Right ventricle myocardium inferior (tissue), 1 donor: ENCODE measurements at regions of chr11 and their contacts with region 1.

Region 1: DNA sequence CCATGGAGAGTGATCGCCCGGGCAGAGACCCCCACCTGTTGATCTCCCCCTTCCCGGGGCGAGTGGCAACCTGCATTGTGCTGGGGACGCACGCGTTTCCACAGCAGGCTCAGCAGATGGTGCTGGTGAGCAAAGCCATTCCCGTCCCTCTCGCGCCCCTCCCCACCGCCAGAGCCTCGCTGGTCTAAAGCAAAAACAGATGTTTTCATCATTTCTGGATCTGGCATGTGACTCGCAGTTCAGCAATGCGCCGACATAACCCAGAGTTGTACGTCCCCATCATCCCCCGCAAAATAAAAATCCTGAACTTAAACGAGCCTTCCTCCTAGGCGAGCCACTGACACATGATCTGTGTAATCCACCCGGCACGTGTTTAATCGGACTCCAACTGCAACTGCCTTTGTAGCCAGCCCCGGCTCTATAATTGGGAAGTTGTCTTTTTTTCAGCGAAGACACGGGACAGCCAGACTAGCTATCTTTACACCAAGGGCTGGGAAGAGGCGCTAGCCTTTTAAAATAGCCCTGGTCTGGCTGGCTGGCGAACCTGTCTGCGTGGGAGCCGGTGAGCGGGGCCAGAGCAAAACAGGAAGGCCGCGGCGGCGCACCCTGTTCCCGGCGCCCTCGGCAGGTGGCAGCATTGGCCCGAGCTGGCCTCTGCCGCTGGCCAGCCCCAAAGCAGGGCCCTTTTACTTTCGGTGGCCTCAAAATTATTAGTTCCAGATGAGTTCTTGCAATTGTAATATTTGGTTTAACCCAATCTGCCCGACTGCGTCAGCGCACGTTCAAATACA is 203.0 kb upstream of the SORL1-AS1 start:
- DNase-seq: peak; percentile 94
- ATAC-seq: peak; percentile 96

Region 2: DNA sequence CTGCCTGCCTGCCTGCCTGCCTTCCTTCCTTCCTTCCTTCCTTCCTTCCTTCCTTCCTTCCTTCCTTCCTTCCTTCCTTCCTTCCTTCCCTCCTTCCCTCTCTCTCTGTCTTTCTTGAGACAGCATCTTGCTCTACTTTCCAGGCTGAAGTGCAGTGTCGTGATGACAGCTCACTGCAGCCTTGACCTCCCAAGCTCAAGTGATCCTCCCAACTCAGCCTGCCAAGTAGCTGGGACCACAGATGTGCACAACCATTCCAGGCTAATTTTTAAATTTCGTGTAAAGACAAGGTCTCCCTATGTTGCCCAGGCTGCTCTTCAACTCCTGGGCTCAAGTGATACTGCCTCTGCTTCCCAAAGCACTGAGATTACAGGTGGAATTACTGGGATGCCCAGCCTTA is 125.2 kb after region 1 on chr11:
- intact Hi-C with region 1: no loop called
- DNase-seq: no peak
- ATAC-seq: no peak

Region 3: GRCh38 chr11:121892131-121892681 is 236.5 kb after region 1 on chr11:
- intact Hi-C with region 1: loop called (anchors 5 kb)
- DNase-seq: no peak
- ATAC-seq: peak; percentile 34

Region 4: GRCh38 chr11:122101625-122102291 is 446.0 kb after region 1 on chr11:
- intact Hi-C with region 1: loop called (anchors 1 kb)
- DNase-seq: peak; percentile 71
- ATAC-seq: peak; percentile 91

Region 5: DNA sequence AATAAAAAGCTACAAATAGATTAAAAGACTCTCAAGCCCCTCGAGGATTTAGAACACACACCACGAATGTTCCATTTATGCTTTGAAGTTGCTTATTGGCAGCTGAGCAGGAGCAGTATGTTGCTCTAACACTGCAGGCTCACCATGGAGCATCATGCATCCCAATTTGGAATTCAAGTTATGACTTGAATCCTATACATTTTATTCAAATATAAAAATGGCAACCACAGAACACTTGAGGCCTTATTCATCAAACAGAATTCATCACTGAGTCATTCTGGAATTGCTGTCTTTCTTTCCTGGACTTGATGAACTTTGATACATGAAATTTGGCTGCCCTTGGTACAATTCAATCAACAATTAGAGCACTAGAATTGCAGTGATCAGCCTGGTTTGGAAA is 484.8 kb after region 1 on chr11:
- intact Hi-C with region 1: no loop called
- DNase-seq: no peak
- ATAC-seq: no peak

Region 6: DNA sequence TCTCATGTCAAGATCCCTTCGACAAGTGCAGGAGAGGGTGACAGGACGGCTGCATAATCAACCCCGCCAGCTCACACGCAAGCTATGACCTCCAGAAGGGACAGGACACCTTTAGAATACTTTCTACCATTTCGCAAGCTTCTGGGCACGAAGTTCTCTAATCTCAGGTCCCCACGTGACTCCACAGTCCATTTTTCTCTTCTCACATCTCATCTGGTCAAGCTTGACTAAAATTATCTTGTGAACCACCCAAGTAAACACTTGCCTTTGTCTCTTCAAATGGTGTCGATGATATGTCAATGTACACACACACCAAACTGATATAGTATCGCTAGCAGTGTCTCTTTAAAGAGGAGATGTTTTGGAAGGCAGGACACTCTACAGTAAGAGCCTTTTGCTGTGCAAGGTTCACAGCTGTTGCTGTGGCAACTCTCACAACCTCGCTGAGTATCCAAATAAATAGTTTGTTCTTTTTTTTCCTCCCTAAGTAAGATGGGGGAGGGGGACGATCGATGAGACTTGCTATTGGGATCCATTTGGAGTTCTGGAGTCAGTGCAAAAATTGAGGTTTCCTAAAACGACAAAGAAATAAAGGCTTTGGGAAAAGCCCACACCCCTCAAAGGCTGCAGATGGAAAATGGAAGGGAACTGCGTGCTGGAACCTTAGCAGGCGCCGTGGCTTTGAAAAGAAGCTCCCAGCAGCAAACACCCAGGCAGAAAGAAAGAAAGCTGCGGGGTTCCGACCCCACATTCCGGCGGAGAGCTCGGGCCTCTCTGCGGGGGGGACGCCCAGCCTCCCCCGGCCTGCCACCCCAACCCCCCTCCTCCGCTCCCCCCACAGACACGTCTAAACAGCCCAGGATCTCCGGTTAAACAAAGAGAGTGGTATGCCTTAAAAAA is 784.4 kb after region 1 on chr11:
- intact Hi-C with region 1: loop called (anchors 2 kb)
- DNase-seq: no peak
- ATAC-seq: peak; percentile 87

Region 7: DNA sequence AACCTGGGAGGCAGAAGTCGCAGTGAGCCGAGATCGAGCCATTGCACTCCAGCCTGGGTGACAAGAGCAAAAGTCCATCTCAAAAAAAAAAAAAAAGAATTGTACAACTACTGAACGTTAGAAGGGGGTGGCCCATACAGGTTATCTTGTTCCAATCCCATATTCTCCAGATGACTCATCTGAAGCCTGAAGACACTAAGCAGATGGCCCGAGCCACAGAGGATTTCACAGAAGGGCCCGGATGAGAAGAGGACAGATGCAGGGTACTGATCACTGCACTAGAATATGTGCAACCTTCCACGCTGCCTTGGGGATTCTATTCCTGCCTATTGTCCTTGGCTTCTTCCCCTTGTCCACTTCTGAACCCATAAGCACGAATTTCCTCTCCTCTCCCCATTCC is 928.9 kb after region 1 on chr11:
- intact Hi-C with region 1: loop called (anchors 5 kb)
- DNase-seq: no peak
- ATAC-seq: no peak